GM12878 (cell line): ENCODE measurements at regions of chr9 and their contacts with region 1.

Region 1: DNA sequence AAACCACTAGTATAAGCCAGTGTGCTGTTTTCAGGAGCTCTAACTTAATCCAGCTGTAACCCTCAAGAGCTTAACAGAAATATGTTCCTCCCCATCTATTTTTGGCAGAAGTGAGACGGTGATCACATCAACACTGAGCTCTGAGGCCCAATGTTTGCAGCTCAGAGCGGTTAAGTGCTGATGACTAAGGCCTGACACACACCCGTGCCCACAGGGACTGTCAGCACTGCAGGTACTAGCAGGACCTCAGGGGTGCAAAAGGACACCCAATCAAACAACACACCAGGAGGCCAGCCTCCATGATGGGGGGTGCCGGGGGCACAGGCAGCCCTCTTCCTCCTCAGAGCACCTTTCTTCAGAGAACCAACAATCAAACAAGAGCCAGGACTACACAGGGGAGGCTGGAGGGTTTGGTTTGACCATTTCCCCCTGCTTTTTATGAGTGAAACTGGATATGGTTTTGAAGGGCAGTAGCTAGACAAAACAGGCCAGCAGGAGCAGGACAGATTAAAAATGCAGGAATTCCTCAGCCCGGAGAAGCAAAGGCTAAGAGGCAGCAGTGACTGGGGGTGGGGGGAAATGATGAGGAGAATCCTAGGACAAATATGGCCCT is 61.3 kb downstream of the RAPGEF1 start:
- DNase-seq: peak; percentile 87
- ATAC-seq: peak; percentile 94
- H3K4me3 ChIP-seq: peak overlapping the region; percentile 63; the same call in 1 of the 2 replicates
- H3K27ac ChIP-seq: peak overlapping the region; percentile 87
- H3K4me1 ChIP-seq: peaks cover 50% of the 10 kb centered on the region
- H3K27me3 ChIP-seq: no peaks in the 10 kb centered on the region
- CTCF ChIP-seq: no peak
- EP300 ChIP-seq: peak; percentile 60 to 70; a peak in 3 of 4 replicates
- POLR2A ChIP-seq: peak; percentile 75
- RAD21 ChIP-seq: peak; percentile 25; the same call in 1 of the 2 replicates

Region 2: GRCh38 chr9:131530278-131530919 is 148.2 kb before region 1 on chr9:
- CTCF ChIA-PET with region 1: no interaction called
- POLR2A ChIA-PET with region 1: no interaction called
- RAD21 ChIA-PET with region 1: no interaction called
- SMC1A ChIA-PET with region 1: no interaction called
- in situ Hi-C with region 1: no loop called
- intact Hi-C with region 1: no loop called
- DNase-seq: no peak
- ATAC-seq: peak; percentile 55
- H3K4me3 ChIP-seq: peak overlapping the region; percentile 81
- H3K27ac ChIP-seq: peak overlapping the region; percentile 65
- H3K4me1 ChIP-seq: peaks cover 4% of the 10 kb centered on the region
- H3K27me3 ChIP-seq: no peaks in the 10 kb centered on the region
- CTCF ChIP-seq: peak in 2 of 3 experiments; percentile 2 to 21; a peak in 1 of 6 replicates
- EP300 ChIP-seq: no peak
- POLR2A ChIP-seq: no peak
- RAD21 ChIP-seq: peak; percentile 26; the same call in 1 of the 2 replicates

Region 3: DNA sequence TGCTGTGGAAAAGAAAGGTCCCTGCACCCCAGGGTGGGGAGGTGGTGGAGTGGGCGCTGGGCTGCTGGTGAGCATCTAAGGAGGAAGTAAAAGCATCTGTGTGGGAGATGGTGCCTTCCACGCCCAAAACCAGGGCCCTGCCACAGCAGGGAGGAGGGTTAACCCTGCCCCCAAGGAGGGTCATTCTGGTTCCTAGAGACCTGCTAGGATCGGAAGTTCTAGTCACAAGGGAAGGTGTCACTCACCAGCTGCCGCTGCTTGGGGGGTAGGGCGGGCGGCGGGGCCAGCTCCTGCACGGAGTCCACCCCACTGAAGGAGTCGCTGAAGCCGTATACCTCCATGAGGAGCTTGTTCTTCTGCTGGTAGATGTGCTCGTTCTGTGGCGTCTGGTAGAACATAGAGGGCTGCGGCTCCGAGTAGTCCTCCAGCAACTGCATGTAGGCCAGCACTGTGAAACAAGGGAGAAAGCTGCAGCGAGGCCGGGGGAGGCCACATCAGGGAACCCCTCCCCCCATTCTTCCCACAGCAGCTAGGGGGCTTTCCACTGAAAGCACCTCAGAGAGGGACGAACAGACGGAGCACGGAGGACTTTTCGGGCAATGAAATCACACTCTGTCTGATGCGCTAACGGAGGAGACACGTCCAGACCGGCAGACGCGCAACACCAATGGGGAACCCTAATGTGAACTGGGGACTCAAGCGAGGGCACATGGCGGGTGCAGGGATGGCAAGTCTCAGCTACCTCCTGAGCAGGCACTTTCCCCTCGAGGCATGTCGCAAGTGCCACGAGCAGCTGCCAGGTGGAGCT is 56.9 kb before region 1 on chr9:
- CTCF ChIA-PET with region 1: interaction called, 23 read pairs
- POLR2A ChIA-PET with region 1: interaction called, 54 read pairs
- RAD21 ChIA-PET with region 1: interaction called, 51 read pairs
- SMC1A ChIA-PET with region 1: interaction called, 35 read pairs
- in situ Hi-C with region 1: no loop called
- intact Hi-C with region 1: no loop called
- DNase-seq: peak; percentile 73
- ATAC-seq: peak; percentile 76
- H3K4me3 ChIP-seq: peak overlapping the region; percentile 16; the same call in 1 of the 2 replicates
- H3K27ac ChIP-seq: peak overlapping the region; percentile 89
- H3K4me1 ChIP-seq: peaks cover 32% of the 10 kb centered on the region
- H3K27me3 ChIP-seq: no peaks in the 10 kb centered on the region
- CTCF ChIP-seq: peak in 2 of 3 experiments; percentile 7 to 12; a peak in 1 of 6 replicates
- EP300 ChIP-seq: peak; percentile 7 to 44; a peak in 1 of 4 replicates
- POLR2A ChIP-seq: peak; percentile 71
- RAD21 ChIP-seq: no peak

Region 4: GRCh38 chr9:131645078-131645776 is 33.4 kb before region 1 on chr9:
- CTCF ChIA-PET with region 1: interaction called, 5 read pairs
- POLR2A ChIA-PET with region 1: interaction called, 3 read pairs
- RAD21 ChIA-PET with region 1: interaction called, 18 read pairs
- SMC1A ChIA-PET with region 1: interaction called, 28 read pairs
- in situ Hi-C with region 1: no loop called
- intact Hi-C with region 1: no loop called
- DNase-seq: no peak
- ATAC-seq: peak; percentile 68
- H3K4me3 ChIP-seq: no peak overlapping the region
- H3K27ac ChIP-seq: peak overlapping the region; percentile 20
- H3K4me1 ChIP-seq: peaks cover 28% of the 10 kb centered on the region
- H3K27me3 ChIP-seq: no peaks in the 10 kb centered on the region
- CTCF ChIP-seq: no peak
- EP300 ChIP-seq: no peak
- POLR2A ChIP-seq: no peak
- RAD21 ChIP-seq: no peak

Region 5: DNA sequence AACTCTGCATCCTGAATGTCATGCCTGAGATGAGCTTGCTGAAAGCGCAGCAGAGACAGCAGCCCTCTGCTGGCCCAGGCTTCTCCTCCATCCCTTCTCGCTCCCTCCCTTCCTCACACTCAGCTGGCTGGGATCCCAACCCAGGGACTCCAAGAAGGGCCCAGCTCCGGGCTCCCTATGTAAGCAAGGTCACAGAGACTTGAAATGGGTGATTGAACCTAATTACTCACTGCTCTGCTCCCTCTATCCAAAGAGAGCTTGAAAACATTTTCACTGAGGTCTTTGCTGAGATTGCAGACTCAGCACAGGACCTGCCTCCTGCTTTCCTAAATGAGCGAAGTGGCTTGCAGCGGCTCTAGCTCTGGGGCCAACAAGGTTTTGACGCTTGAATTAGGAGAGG is 18.5 kb after region 1 on chr9:
- CTCF ChIA-PET with region 1: interaction called, 20 read pairs
- POLR2A ChIA-PET with region 1: interaction called, 39 read pairs
- RAD21 ChIA-PET with region 1: interaction called, 30 read pairs
- SMC1A ChIA-PET with region 1: interaction called, 122 read pairs
- in situ Hi-C with region 1: no loop called
- intact Hi-C with region 1: no loop called
- DNase-seq: no peak
- ATAC-seq: no peak
- H3K4me3 ChIP-seq: no peak overlapping the region
- H3K27ac ChIP-seq: no peak overlapping the region
- H3K4me1 ChIP-seq: peaks cover 30% of the 10 kb centered on the region
- H3K27me3 ChIP-seq: no peaks in the 10 kb centered on the region
- CTCF ChIP-seq: no peak
- EP300 ChIP-seq: no peak
- POLR2A ChIP-seq: no peak
- RAD21 ChIP-seq: no peak

Region 6: DNA sequence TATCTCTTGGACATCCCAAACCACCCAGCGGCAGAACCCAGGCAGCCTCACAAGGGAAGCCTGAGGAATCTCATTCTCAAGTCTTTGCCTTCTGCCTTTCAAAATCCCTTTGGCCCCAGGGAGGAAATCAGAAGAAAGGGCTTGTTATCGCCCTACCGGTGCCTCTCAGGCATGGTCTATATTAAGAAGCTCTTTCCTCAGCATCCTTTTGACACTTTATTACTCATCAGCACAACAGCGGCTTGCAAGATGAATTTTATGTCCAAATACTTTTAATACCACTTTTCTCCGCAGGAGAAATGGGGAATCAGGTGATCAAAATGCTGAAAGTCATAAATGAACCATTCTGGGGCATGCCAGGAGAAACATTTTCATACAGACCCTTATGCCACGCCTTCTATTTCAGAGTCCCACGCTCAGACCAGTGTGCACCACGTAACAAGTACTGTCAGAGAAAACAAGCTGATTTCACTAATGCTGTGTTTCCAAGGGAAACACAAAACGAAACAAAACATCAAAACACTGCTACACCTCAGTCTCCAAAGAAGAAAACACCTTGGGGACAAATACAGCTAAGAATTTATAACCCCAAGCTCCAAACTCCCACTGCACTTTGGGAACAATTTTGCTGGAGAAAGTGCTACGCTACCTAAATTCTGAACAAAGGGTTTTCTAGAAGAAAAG is 31.3 kb after region 1 on chr9:
- CTCF ChIA-PET with region 1: interaction called, 73 read pairs
- POLR2A ChIA-PET with region 1: interaction called, 113 read pairs
- RAD21 ChIA-PET with region 1: interaction called, 85 read pairs
- SMC1A ChIA-PET with region 1: interaction called, 109 read pairs
- in situ Hi-C with region 1: no loop called
- intact Hi-C with region 1: loop called (anchors 2 kb)
- DNase-seq: peak; percentile 77
- ATAC-seq: peak; percentile 76
- H3K4me3 ChIP-seq: peak overlapping the region; percentile 57
- H3K27ac ChIP-seq: peak overlapping the region; percentile 83
- H3K4me1 ChIP-seq: peaks cover 60% of the 10 kb centered on the region
- H3K27me3 ChIP-seq: no peaks in the 10 kb centered on the region
- CTCF ChIP-seq: 0 out of 6 replicates have a peak, but pooled peaks of 1 of the 3 experiments have one; percentile 8
- EP300 ChIP-seq: peak in 1 of 2 experiments; percentile 82; a peak in 3 of 4 replicates
- POLR2A ChIP-seq: no peak
- RAD21 ChIP-seq: no peak

Region 7: GRCh38 chr9:131733541-131734061 is 55.0 kb after region 1 on chr9:
- CTCF ChIA-PET with region 1: interaction called, 197 read pairs
- POLR2A ChIA-PET with region 1: interaction called, 271 read pairs
- RAD21 ChIA-PET with region 1: interaction called, 408 read pairs
- SMC1A ChIA-PET with region 1: interaction called, 535 read pairs
- in situ Hi-C with region 1: no loop called
- intact Hi-C with region 1: loop called (anchors 2 kb)
- DNase-seq: no peak
- ATAC-seq: peak; percentile 2
- H3K4me3 ChIP-seq: peak overlapping the region; percentile 70
- H3K27ac ChIP-seq: peak overlapping the region; percentile 99
- H3K4me1 ChIP-seq: peaks cover 75% of the 10 kb centered on the region
- H3K27me3 ChIP-seq: no peaks in the 10 kb centered on the region
- CTCF ChIP-seq: no peak
- EP300 ChIP-seq: no peak
- POLR2A ChIP-seq: peak; percentile 42
- RAD21 ChIP-seq: no peak

Region 8: DNA sequence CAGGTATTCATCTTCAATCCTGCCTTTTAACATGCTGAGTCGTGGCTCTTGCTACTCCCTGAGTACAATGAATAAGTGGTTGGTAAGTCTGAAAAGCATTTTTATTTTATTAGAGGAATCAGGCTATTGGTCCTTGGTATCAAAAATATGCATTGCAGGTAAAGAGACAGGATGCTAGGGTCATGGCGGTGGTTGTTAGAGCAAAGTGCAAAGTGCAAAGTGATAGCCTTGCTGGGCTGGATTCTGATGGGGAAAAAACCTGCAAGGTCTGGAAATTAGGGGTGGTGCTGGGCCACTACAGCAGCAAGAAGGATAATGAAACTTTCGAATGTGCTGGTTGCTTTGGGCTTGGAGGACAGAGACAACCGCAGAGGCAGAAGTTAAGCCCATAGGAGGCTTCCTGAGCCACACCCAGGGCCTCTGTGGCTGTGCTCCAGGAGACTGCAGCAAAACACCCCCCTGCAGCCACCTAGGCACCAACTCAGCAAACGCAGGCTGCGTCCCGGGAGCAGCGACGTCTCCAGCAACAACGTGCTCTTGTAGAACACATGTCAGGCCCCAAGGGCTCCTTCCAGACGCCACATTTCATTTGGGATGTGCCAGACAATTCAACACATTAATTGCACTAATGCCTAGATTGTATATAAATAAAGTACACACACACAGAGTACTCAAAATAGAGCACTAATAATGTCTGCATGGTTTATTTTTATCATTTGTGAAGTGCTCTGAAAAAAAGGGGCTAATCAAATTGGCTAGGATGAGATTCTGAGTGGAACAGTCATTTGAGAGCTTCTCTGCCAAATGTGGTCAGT is 211.0 kb after region 1 on chr9:
- CTCF ChIA-PET with region 1: no interaction called
- POLR2A ChIA-PET with region 1: no interaction called
- RAD21 ChIA-PET with region 1: no interaction called
- SMC1A ChIA-PET with region 1: no interaction called
- in situ Hi-C with region 1: no loop called
- intact Hi-C with region 1: no loop called
- DNase-seq: no peak
- ATAC-seq: no peak
- H3K4me3 ChIP-seq: no peak overlapping the region
- H3K27ac ChIP-seq: no peak overlapping the region
- H3K4me1 ChIP-seq: no peaks in the 10 kb centered on the region
- H3K27me3 ChIP-seq: no peaks in the 10 kb centered on the region
- CTCF ChIP-seq: no peak
- EP300 ChIP-seq: no peak
- POLR2A ChIP-seq: no peak
- RAD21 ChIP-seq: no peak